Motor neuron (in vitro differentiated cells): ENCODE measurements at regions of chr18 and their contacts with region 1.

Region 1: DNA sequence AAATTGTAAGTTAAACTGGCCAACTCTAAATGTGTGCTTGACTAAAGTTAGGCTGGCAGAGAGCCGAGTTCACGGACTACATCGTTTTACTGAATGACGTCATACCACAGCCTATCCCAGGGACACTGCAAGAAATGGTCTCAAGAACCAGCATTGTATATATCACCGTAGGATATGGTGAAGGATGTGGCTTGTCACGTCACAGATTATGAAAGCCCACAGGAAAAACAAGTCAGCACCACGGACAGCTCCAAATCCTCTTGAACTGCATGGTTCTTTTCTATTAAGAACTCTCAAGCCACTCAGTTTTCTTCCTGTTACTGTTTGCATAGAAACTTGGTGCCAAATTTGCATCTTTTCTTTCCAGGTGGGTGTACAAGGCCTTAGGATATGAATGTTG is 85.1 kb upstream of the ACAA2 start:
- ATAC-seq: peak in 4 of 8 experiments; percentile 10 to 61 (median 55)
- H3K4me3 ChIP-seq: no peak overlapping the region
- H3K27ac ChIP-seq: no peak overlapping the region
- H3K4me1 ChIP-seq: no peaks in the 10 kb centered on the region

Region 2: GRCh38 chr18:49697757-49698524 is 200.5 kb before region 1 on chr18:
- in situ Hi-C with region 1: no loop called
- ATAC-seq: peak; percentile 60 to 89 (median 72)
- H3K4me3 ChIP-seq: no peak overlapping the region
- H3K27ac ChIP-seq: no peak overlapping the region
- H3K4me1 ChIP-seq: no peaks in the 10 kb centered on the region

Region 3: GRCh38 chr18:49959176-49959575 is 60.8 kb after region 1 on chr18:
- in situ Hi-C with region 1: loop called in 1 of 9 experiments (anchors 10 kb)
- ATAC-seq: no peak
- H3K4me3 ChIP-seq: no peak overlapping the region
- H3K27ac ChIP-seq: no peak overlapping the region
- H3K4me1 ChIP-seq: no peaks in the 10 kb centered on the region

Region 4: DNA sequence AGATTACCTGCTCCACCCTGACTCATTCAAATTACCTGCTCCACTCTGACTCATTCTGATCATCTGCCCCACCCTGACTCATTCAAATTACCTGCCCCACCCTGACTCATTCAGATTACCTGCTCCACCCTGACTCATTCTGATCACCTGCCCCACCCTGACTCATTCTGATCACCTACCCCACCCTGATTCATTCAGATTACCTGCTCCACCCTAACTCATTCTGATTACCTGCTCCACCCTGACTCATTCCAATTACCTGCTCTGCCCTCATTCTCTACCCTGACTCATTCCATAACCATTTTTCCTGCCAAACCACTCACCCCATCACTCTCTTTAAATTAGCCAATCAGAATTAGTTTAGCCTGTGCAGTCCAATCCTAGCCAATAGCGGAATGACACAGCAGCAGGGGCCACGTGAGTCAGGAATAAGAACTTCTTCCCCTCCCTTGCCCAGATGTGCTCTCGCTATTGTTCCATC is 341.7 kb after region 1 on chr18:
- in situ Hi-C with region 1: no loop called
- ATAC-seq: peak in 2 of 8 experiments; percentile 30 to 85
- H3K4me3 ChIP-seq: no peak overlapping the region
- H3K27ac ChIP-seq: no peak overlapping the region
- H3K4me1 ChIP-seq: no peaks in the 10 kb centered on the region